ENCODE measurements at regions of chr13 and their contacts with region 1.

Region 1: DNA sequence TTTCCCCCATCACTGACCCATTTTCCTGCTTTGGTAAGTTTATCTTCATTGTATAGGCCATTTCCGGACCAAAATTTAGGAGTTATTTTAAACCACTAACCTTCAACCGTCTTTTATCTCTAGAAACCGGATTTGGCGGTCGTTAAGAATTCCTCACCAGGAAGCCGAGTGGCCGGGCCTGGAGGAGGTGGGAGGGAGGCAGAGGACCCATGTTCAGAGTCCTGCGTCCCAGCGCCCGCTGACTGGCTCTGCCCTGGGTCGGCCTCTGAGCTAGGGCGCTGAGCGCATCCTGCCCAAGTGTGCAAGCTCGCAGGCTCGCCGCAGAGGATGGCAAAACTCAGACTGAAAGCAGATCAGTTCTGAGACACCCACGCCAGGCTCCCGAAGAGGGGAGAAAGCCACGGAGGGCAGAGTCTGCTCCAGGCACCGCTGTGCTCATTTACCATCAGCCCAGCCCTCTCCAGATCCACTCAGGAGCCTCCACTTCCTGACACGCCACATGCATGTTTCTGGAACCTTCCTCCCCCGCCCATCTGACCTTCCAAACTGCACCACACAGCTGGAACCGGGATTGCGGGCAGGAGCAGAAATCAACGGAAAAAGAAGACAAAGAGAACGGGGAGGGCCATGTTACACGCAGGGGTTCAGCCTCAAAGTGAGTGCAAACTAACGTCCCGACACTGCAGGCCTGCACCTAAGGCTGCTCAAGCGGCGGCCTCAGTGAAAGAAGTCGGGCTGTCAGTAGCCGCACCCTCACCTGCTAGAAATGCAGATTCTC is 8.3 kb downstream of the COL4A1 start:
- DNase-seq: peak; percentile 52 to 75 (median 65)
- ATAC-seq: peak; percentile 33 to 70 (median 65)
- H3K4me3 ChIP-seq: peak overlapping the region in 9 of 12 donors; percentile 7 to 39 (median 34)
- H3K27ac ChIP-seq: peak overlapping the region in 11 of 12 donors; percentile 52 to 99 (median 77)
- H3K4me1 ChIP-seq: peaks cover 23 to 100% (median 82%) of the 10 kb centered on the region in 12 donors
- H3K27me3 ChIP-seq: peaks cover 0 to 10% (median 0%) of the 10 kb centered on the region in 9 donors
- CTCF ChIP-seq: no peak
- POLR2A ChIP-seq: no peak

Region 2: DNA sequence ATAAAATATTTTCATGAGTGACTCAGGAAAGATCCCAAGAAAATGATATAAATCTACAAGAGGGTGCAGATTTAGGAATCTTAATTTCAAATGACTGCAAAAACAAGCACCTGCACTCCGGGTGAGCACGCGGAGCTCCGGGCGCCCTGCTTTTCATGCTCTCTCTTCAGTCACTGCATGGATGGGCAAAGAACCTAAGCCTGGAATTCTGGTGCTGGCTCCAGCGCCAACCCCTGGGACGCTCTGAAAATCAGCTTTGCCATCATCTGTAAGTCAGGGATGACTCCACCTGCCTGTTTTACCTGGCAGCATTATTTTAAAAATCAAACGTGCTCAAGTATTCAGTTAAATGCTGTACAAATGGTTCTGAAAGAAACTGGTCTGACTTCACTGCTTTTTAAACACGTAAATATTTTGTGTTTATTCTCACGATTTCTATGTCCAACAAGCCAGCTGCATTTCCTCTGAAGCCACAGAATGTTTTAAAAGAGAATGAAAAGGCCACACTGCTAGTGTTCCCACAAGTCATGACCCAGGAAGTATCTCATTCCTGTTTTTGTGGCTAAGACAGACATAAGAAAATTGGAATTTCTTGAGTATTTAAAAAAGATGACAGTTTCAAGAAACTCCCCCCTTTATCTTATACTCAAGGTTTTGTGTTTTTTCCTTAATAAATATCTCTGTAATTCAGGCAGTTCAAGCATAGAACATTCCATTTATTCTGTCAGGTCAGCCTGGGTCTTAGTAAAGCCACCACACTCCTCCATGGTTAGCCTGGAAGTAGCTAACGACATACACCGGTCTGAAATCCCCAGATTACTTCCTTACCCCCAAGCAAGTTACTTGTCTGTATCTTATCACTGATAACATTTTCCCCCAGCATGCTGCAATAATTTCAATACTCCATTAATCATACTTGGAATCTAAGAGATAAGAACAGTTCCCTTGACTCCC is 72.8 kb before region 1 on chr13:
- intact Hi-C with region 1: loop called in 2 of 10 experiments (anchors 5 kb)
- DNase-seq: no peak
- ATAC-seq: no peak
- H3K4me3 ChIP-seq: no peak overlapping the region
- H3K27ac ChIP-seq: peak overlapping the region in 11 of 12 donors; percentile 8 to 88 (median 39)
- H3K4me1 ChIP-seq: peaks cover 9 to 79% (median 56%) of the 10 kb centered on the region in 12 donors
- H3K27me3 ChIP-seq: no peaks in the 10 kb centered on the region
- CTCF ChIP-seq: no peak
- POLR2A ChIP-seq: no peak

Region 3: GRCh38 chr13:110233181-110233950 is 65.3 kb before region 1 on chr13:
- intact Hi-C with region 1: loop called in 2 of 10 experiments (anchors 5 kb)
- DNase-seq: peak in 3 of 5 donors; percentile 61 to 68 (median 66)
- ATAC-seq: peak; percentile 16 to 59 (median 47)
- H3K4me3 ChIP-seq: peak overlapping the region in 9 of 12 donors; percentile 6 to 41 (median 19)
- H3K27ac ChIP-seq: peak overlapping the region; percentile 59 to 88 (median 78)
- H3K4me1 ChIP-seq: peaks cover 17 to 86% (median 76%) of the 10 kb centered on the region in 12 donors
- H3K27me3 ChIP-seq: no peaks in the 10 kb centered on the region
- CTCF ChIP-seq: no peak
- POLR2A ChIP-seq: no peak

Region 4: GRCh38 chr13:110265682-110266430 is 32.8 kb before region 1 on chr13:
- intact Hi-C with region 1: loop called in 6 of 10 experiments (anchors 1 to 5 kb)
- DNase-seq: peak; percentile 47 to 76 (median 69)
- ATAC-seq: peak in 2 of 4 donors; percentile 2 to 8
- H3K4me3 ChIP-seq: peak overlapping the region in 3 of 12 donors; percentile 1 to 15 (median 5)
- H3K27ac ChIP-seq: peak overlapping the region; percentile 41 to 80 (median 63)
- H3K4me1 ChIP-seq: peaks cover 6 to 99% (median 87%) of the 10 kb centered on the region in 12 donors
- H3K27me3 ChIP-seq: no peaks in the 10 kb centered on the region
- CTCF ChIP-seq: no peak
- POLR2A ChIP-seq: no peak

Measured in heart left ventricle (tissue), 16 donors.